Left colon (tissue), 2 donors: ENCODE measurements at regions of chr12 and their contacts with region 1.

Region 1: DNA sequence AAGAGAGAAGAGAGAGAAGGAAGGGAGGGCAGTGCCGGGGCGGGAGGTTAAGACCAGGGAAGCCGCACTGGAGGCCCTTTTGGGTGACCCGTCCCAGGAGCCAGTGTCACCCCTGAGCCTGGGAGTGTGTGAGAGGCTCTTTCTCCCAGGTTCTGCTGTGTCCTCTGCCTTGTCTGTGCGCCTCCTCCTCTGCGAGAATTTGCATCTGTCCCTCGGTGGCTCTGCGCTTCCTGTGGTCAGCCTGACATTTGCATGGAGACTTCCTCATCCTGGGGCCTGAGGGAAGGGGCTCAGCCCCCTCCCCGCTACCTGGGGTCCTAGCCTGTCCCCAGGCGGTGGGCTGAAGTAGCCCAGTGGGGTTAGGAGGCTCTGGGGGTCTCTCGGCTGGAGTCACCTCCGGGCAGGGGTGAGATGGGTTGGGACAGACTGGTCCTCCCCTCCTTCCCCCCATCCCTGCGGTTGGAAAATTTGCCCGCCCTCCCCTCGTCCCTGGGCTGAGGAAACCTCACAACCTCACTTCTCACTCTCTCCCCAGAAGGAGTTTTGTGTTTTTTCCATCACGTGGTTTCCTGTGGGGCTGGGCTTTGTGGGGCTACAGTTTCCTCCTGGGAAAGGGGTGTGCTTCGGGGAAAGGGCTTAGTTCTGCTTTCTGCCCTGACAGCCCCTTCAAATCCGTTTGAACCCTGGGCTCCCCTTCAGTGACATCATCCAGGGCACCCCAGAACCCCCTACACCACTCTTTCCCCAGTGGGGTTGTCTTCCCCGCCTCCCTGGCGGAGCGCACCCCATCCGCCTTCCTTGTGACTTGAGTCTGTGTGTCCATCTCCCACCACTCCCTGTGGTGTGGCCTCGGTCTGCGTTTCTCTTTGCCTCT is 2.5 kb downstream of the PTPN6 start:
- DNase-seq: peak; percentile 63 to 76
- ATAC-seq: peak; percentile 31

Region 2: DNA sequence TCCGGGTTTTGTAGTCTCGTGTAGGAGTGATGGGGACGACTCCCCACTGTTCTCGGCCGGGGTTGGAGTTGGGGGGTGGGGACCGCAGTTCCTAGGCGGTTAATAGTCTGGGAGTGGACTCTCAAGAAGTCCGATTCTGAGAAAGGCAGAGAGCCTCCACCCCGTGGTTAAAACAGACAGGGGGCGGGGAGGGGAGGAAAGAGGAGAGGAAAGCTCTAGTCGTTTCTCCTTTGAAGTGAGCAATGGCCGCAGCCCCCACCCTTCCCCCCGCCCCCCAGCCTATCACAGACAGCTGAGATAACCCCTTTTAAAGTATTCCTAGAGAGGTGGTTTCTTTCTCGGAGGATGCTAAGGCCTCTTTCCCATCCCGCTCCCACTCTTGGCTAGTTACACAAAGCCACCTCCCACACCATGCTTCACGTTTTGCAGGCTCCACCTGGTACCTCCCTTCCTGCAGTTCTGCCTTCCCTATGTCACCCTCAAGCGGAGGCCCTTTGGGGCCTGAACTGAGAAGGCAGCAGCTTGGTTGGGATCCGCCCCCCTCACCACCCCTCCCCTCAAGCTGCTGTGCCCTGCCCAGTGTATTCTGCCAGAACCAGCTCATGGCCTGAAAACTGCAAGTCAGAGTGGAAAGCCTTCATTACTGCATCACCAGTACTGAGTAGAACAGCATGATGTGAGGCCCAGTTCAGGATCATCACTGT is 100.9 kb before region 1 on chr12:
- intact Hi-C with region 1: no loop called
- DNase-seq: peak; percentile 52 to 66
- ATAC-seq: no peak

Region 3: DNA sequence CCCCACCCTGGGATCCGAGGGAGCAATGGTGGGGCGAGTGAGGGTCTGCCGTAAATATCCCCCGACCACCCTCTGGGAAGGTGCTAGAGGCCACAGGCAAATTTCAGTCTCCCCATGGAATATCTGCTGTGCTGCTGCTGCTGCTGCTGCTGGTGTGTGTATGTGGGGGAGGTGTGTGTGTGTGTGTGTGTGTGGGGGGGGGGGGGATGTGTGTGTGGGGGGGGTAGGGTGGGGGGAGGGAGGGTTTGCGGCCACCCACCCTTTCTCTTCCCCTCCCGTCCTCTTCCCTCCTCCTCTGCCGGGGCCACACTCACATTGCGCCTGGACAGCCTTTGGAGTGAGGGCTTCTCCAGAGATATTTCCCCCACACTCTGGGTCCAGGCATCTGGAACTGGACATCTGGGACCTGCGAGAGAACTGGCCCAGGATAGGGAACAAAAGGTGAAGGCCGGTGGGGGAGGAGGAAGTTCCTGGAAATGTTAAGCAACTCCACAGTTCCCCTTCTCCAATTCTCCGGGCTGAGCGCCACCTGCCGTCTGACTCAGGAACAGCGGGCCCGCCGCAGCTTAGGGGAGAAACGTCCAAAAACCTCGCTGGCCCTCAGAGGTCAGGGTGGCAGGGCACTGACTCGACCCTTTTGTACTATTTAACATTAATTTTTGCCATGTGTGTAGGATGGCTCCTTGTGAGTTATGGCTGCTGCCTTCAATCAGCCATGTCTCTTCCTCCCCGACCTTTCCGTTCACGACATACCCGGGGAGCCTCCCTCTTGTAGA is 155.3 kb after region 1 on chr12 and contains the start of gene C1RL:
- intact Hi-C with region 1: loop called in 1 of 2 experiments (anchors 10 kb)
- DNase-seq: peak; percentile 88 to 92
- ATAC-seq: peak; percentile 76
- total RNA-seq, gene C1RL: 48.6 to 52.7 TPM